Activated T-helper 1 cell treated with anti-CD3 and anti-CD28 coated beads, Interleukin-12 subunit alpha, Interleukin-12 subunit beta, Interleukin-2, Interleukin-4 antibody, amounts not matched to agents 30 ng/mL and 10 ng/mL and 1 ng/mL, durations not matched to agents 14 hours and 24 hours and 36 hours (primary cell): ENCODE measurements at regions of chr7 and their contacts with region 1.

Region 1: GRCh38 chr7:99789441-99790070 is 5.6 kb upstream of the CYP3A4 start:
- DNase-seq: no peak
- H3K4me3 Mint-ChIP-seq: no peak overlapping the region
- H3K27ac Mint-ChIP-seq: no peak overlapping the region
- H3K4me1 Mint-ChIP-seq: peaks cover 23% of the 10 kb centered on the region
- H3K27me3 Mint-ChIP-seq: no peaks in the 10 kb centered on the region

Region 2: GRCh38 chr7:99123571-99124041 is 666.0 kb before region 1 on chr7:
- intact Hi-C with region 1: no loop called
- DNase-seq: no peak
- H3K4me3 Mint-ChIP-seq: no peak overlapping the region
- H3K27ac Mint-ChIP-seq: no peak overlapping the region
- H3K4me1 Mint-ChIP-seq: peaks cover 26% of the 10 kb centered on the region
- H3K27me3 Mint-ChIP-seq: no peaks in the 10 kb centered on the region

Region 3: GRCh38 chr7:99631295-99632109 is 158.1 kb before region 1 on chr7:
- intact Hi-C with region 1: loop called (anchors 2 kb)
- DNase-seq: no peak
- H3K4me3 Mint-ChIP-seq: no peak overlapping the region
- H3K27ac Mint-ChIP-seq: peak overlapping the region; percentile 75
- H3K4me1 Mint-ChIP-seq: peaks cover 18% of the 10 kb centered on the region
- H3K27me3 Mint-ChIP-seq: no peaks in the 10 kb centered on the region